Activated CD4-positive, alpha-beta T cell treated with anti-CD3 and anti-CD28 coated beads for 36 hours (primary cell): ENCODE measurements at regions of chr15 and their contacts with region 1.

Region 1: GRCh38 chr15:68559345-68560310 is 19.2 kb upstream of the CORO2B start:
- DNase-seq: peak; percentile 86
- ATAC-seq: peak; percentile 90
- H3K4me3 Mint-ChIP-seq: peak overlapping the region; percentile 69
- H3K27ac Mint-ChIP-seq: no peak overlapping the region
- H3K4me1 Mint-ChIP-seq: peaks cover 14% of the 10 kb centered on the region
- H3K27me3 Mint-ChIP-seq: peaks cover 47% of the 10 kb centered on the region

Region 2: DNA sequence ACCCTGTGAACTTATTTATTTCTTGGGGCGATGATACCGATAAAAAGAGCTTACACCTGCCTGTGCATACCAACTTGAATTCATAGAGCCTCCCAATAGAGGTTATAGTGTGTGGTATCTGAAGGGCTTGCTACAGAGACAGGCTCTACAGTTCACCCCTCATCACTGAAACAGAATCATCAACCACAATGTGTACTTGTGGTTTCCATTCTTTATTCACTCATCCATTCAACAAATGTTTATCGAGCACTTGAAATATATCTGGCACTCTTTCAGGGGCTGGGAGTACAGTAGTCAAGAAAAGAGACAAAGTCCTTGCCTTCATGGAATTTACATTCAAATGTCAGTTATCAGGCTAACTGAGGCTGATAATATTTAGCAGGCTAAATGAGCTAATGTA is 868.7 kb before region 1 on chr15:
- CTCF ChIA-PET with region 1: no interaction called
- POLR2A ChIA-PET with region 1: no interaction called
- intact Hi-C with region 1: no loop called
- DNase-seq: no peak
- ATAC-seq: no peak
- H3K4me3 Mint-ChIP-seq: no peak overlapping the region
- H3K27ac Mint-ChIP-seq: no peak overlapping the region
- H3K4me1 Mint-ChIP-seq: peaks cover 2% of the 10 kb centered on the region
- H3K27me3 Mint-ChIP-seq: no peaks in the 10 kb centered on the region

Region 3: GRCh38 chr15:68650901-68651709 is 91.5 kb after region 1 on chr15:
- CTCF ChIA-PET with region 1: interaction called, 10 read pairs
- POLR2A ChIA-PET with region 1: no interaction called
- intact Hi-C with region 1: loop called in 1 of 2 experiments (anchors 1 kb)
- DNase-seq: peak; percentile 73
- ATAC-seq: peak; percentile 68
- H3K4me3 Mint-ChIP-seq: no peak overlapping the region
- H3K27ac Mint-ChIP-seq: no peak overlapping the region
- H3K4me1 Mint-ChIP-seq: no peaks in the 10 kb centered on the region
- H3K27me3 Mint-ChIP-seq: no peaks in the 10 kb centered on the region

Region 4: GRCh38 chr15:68672781-68673205 is 113.2 kb after region 1 on chr15:
- CTCF ChIA-PET with region 1: interaction called, 124 read pairs
- POLR2A ChIA-PET with region 1: no interaction called
- intact Hi-C with region 1: loop called (anchors 1 kb)
- DNase-seq: no peak
- ATAC-seq: no peak
- H3K4me3 Mint-ChIP-seq: no peak overlapping the region
- H3K27ac Mint-ChIP-seq: no peak overlapping the region
- H3K4me1 Mint-ChIP-seq: peaks cover 4% of the 10 kb centered on the region
- H3K27me3 Mint-ChIP-seq: peaks cover 9% of the 10 kb centered on the region

Region 5: GRCh38 chr15:68730471-68730919 is 170.9 kb after region 1 on chr15:
- CTCF ChIA-PET with region 1: no interaction called
- POLR2A ChIA-PET with region 1: no interaction called
- intact Hi-C with region 1: no loop called
- DNase-seq: peak; percentile 43
- ATAC-seq: no peak
- H3K4me3 Mint-ChIP-seq: no peak overlapping the region
- H3K27ac Mint-ChIP-seq: no peak overlapping the region
- H3K4me1 Mint-ChIP-seq: no peaks in the 10 kb centered on the region
- H3K27me3 Mint-ChIP-seq: peaks cover 4% of the 10 kb centered on the region